ENCODE measurements at regions of chr9 and their contacts with region 1.

Region 1: GRCh38 chr9:137406876-137407589 is 15.9 kb downstream of the EXD3 start:
- DNase-seq: peak; percentile 72
- H3K4me3 Mint-ChIP-seq: no peak overlapping the region
- H3K27ac Mint-ChIP-seq: no peak overlapping the region
- H3K4me1 Mint-ChIP-seq: peaks cover 6% of the 10 kb centered on the region
- H3K27me3 Mint-ChIP-seq: no peaks in the 10 kb centered on the region

Region 2: DNA sequence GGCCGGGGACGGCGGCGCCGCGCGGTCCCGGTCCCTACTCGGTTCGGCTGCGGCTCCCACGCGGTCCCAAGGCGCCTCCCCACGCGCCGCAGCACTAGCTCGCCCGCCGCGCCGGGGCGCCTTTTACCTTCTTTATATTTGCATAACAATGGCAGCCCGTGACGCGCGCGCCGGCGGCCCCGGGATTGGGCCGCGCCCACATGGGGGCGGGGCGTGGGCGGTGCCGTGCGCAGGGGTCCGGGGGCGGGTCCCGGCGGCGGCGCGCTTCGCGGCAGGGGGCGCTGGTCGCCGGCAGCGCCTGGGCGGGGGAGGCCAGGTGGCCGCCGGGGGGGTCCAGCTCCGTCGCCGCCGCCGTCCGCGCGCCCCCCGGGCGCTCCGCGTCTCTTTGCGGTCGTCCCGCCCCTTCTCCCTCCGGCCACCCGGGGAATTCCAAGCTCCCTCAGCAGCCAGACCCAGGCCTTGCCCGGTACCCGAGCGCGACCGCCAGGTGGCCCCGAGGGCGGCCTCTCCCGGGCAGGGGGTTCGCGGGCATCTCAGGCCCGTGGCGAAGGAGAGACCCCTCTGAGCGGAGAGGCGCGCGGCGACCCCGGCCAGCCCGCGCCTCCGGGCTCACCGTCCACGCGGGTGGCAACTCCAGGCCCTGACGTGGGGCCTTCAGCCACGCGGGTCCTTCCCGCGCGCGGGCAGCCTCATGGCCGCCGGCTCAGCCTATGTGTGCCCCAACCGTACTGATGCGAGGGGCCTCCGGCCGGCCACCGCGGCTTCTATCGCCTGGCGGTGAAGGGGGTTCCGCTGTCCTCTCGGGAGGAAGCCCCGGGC is 104.6 kb before region 1 on chr9 and contains the start of gene NRARP:
- CTCF ChIA-PET with region 1: interaction called, 8 read pairs
- intact Hi-C with region 1: loop called (anchors 1 kb)
- DNase-seq: peak; percentile 93
- H3K4me3 Mint-ChIP-seq: peak within 1 kb of the TSS; percentile 73
- H3K27ac Mint-ChIP-seq: no peak within 1 kb of the TSS
- H3K4me1 Mint-ChIP-seq: peaks cover 11% of the 10 kb centered on the region
- H3K27me3 Mint-ChIP-seq: peaks cover 12% of the 10 kb centered on the region
- total RNA-seq, gene NRARP: 1.8 to 2.2 TPM

Region 3: GRCh38 chr9:137326445-137327065 is 80.5 kb before region 1 on chr9:
- CTCF ChIA-PET with region 1: no interaction called
- intact Hi-C with region 1: no loop called
- DNase-seq: no peak
- H3K4me3 Mint-ChIP-seq: peak overlapping the region; percentile 10
- H3K27ac Mint-ChIP-seq: no peak overlapping the region
- H3K4me1 Mint-ChIP-seq: peaks cover 11% of the 10 kb centered on the region
- H3K27me3 Mint-ChIP-seq: peaks cover 11% of the 10 kb centered on the region

Region 4: GRCh38 chr9:137396227-137396626 is 10.8 kb before region 1 on chr9:
- CTCF ChIA-PET with region 1: no interaction called
- intact Hi-C with region 1: loop called (anchors 2 kb)
- DNase-seq: no peak
- H3K4me3 Mint-ChIP-seq: no peak overlapping the region
- H3K27ac Mint-ChIP-seq: no peak overlapping the region
- H3K4me1 Mint-ChIP-seq: peaks cover 21% of the 10 kb centered on the region
- H3K27me3 Mint-ChIP-seq: no peaks in the 10 kb centered on the region

Region 5: DNA sequence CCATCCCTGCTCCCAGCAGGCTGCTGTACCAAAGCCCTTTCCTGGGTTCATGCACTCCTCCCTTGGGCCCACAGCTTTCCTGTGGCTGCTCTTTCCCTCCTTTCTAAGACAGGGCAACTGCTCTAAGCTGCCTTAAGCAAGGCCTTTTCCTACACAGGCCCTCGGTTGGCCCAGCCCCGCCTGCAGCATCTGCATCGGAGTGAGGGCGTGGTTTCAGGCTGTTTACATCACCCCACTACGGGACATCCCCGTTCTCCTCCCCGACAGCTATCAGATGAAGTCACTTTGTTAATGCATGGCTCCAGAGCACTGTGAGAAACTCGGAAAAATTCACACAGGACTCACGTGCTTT is 168.3 kb after region 1 on chr9:
- CTCF ChIA-PET with region 1: no interaction called
- intact Hi-C with region 1: no loop called
- DNase-seq: no peak
- H3K4me3 Mint-ChIP-seq: no peak overlapping the region
- H3K27ac Mint-ChIP-seq: peak overlapping the region; percentile 27
- H3K4me1 Mint-ChIP-seq: peaks cover 42% of the 10 kb centered on the region
- H3K27me3 Mint-ChIP-seq: no peaks in the 10 kb centered on the region

Measured in activated naive CD4-positive, alpha-beta T cell treated with anti-CD3 and anti-CD28 coated beads for 36 hours (primary cell).